Gastrocnemius medialis (tissue), 4 donors: ENCODE measurements at regions of chr6 and their contacts with region 1.

Region 1: GRCh38 chr6:97394160-97394748 is 111.2 kb upstream of the MMS22L start:
- DNase-seq: peak in 1 of 2 donors; percentile 8
- ATAC-seq: peak; percentile 60 to 63
- H3K4me3 ChIP-seq: no peak overlapping the region
- H3K27ac ChIP-seq: no peak overlapping the region
- H3K4me1 ChIP-seq: no peaks in the 10 kb centered on the region
- H3K27me3 ChIP-seq: no peaks in the 10 kb centered on the region
- CTCF ChIP-seq: peak; percentile 65 to 88 (median 82)
- POLR2A ChIP-seq: no peak

Region 2: GRCh38 chr6:96923871-96924493 is 470.3 kb before region 1 on chr6:
- in situ Hi-C with region 1: loop called in 1 of 4 experiments (anchors 25 kb)
- intact Hi-C with region 1: no loop called
- DNase-seq: no peak
- ATAC-seq: peak; percentile 72 to 80
- H3K4me3 ChIP-seq: peak overlapping the region; percentile 55 to 79 (median 70)
- H3K27ac ChIP-seq: peak overlapping the region; percentile 78 to 90 (median 82)
- H3K4me1 ChIP-seq: no peaks in the 10 kb centered on the region
- H3K27me3 ChIP-seq: no peaks in the 10 kb centered on the region
- CTCF ChIP-seq: no peak
- POLR2A ChIP-seq: peak in 1 of 2 donors; percentile 6

Region 3: GRCh38 chr6:97059473-97059872 is 334.8 kb before region 1 on chr6:
- in situ Hi-C with region 1: loop called in 1 of 4 experiments (anchors 25 kb)
- intact Hi-C with region 1: no loop called
- DNase-seq: no peak
- ATAC-seq: peak in 1 of 2 donors; percentile 61
- H3K4me3 ChIP-seq: no peak overlapping the region
- H3K27ac ChIP-seq: no peak overlapping the region
- H3K4me1 ChIP-seq: no peaks in the 10 kb centered on the region
- H3K27me3 ChIP-seq: no peaks in the 10 kb centered on the region
- CTCF ChIP-seq: peak; percentile 18 to 54 (median 25)
- POLR2A ChIP-seq: no peak

Region 4: DNA sequence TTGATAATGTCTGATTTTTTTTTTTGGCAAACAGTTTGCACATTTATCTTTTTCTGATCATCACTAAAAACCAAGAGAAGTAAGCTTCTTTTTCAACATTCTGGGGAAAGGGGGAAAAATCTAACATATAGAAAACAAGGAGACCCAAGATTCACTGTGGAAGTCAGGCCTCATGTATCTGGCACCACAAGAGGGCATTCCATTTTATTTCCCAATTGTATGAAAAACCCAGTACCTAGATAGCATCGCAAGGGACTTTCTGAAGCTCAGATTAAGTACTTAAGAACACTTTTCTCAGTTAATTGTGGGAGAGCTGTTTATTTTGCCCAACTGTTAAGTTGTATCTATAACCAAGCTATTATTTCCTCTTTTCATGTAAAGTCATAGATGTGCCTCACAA is 316.9 kb before region 1 on chr6:
- in situ Hi-C with region 1: loop called in 1 of 4 experiments (anchors 25 kb)
- intact Hi-C with region 1: loop called (anchors 10 kb)
- DNase-seq: no peak
- ATAC-seq: no peak
- H3K4me3 ChIP-seq: no peak overlapping the region
- H3K27ac ChIP-seq: no peak overlapping the region
- H3K4me1 ChIP-seq: no peaks in the 10 kb centered on the region
- H3K27me3 ChIP-seq: no peaks in the 10 kb centered on the region
- CTCF ChIP-seq: no peak
- POLR2A ChIP-seq: no peak

Region 5: DNA sequence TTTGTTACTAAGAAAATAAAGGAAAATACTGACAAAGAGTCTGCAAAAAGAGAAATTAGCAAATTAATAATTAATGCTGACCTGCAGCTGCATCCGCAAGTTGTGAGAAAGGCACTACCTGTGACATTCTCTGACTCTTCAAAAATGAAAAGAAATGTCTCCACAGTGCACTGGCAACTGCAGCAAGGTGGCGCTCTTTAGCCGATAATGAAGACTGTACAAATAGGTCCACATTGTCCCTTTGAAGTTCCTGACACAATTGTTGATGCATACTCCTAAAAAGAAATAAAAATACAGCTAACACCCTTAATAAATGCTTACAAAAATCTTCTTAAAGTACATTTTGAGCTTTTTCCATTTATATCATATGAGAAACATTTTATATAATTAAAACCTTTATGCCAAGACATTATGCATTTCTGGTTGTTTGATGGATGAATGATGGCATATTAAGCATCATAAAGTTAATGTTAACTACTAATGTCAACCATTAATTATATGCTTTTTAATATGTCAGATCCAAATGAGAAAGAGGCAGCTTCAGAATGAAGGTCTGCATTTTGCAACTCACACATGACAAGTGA is 207.7 kb before region 1 on chr6:
- in situ Hi-C with region 1: loop called (anchors 5 to 10 kb)
- intact Hi-C with region 1: loop called (anchors 2 kb)
- DNase-seq: peak in 1 of 2 donors; percentile 17
- ATAC-seq: peak in 1 of 2 donors; percentile 52
- H3K4me3 ChIP-seq: no peak overlapping the region
- H3K27ac ChIP-seq: no peak overlapping the region
- H3K4me1 ChIP-seq: no peaks in the 10 kb centered on the region
- H3K27me3 ChIP-seq: no peaks in the 10 kb centered on the region
- CTCF ChIP-seq: peak; percentile 23 to 74 (median 59)
- POLR2A ChIP-seq: no peak